ENCODE measurements at regions of chr20 and their contacts with region 1.

Region 1: GRCh38 chr20:20680991-20681508 is 31.4 kb downstream of the RALGAPA2 start:
- DNase-seq: no peak
- H3K4me3 ChIP-seq: no peak overlapping the region
- H3K27ac ChIP-seq: no peak overlapping the region
- H3K4me1 ChIP-seq: no peaks in the 10 kb centered on the region
- H3K27me3 ChIP-seq: no peaks in the 10 kb centered on the region
- CTCF ChIP-seq: no peak

Region 2: GRCh38 chr20:20582734-20583133 is 98.3 kb before region 1 on chr20:
- intact Hi-C with region 1: no loop called
- DNase-seq: no peak
- H3K4me3 ChIP-seq: no peak overlapping the region
- H3K27ac ChIP-seq: no peak overlapping the region
- H3K4me1 ChIP-seq: no peaks in the 10 kb centered on the region
- H3K27me3 ChIP-seq: no peaks in the 10 kb centered on the region
- CTCF ChIP-seq: no peak

Region 3: GRCh38 chr20:20761301-20761700 is 80.3 kb after region 1 on chr20:
- intact Hi-C with region 1: loop called (anchors 10 kb)
- DNase-seq: no peak
- H3K4me3 ChIP-seq: no peak overlapping the region
- H3K27ac ChIP-seq: no peak overlapping the region
- H3K4me1 ChIP-seq: no peaks in the 10 kb centered on the region
- H3K27me3 ChIP-seq: no peaks in the 10 kb centered on the region
- CTCF ChIP-seq: no peak

Measured in ascending aorta (tissue), 2 donors.